ENCODE measurements at regions of chr1 and their contacts with region 1.

Region 1: DNA sequence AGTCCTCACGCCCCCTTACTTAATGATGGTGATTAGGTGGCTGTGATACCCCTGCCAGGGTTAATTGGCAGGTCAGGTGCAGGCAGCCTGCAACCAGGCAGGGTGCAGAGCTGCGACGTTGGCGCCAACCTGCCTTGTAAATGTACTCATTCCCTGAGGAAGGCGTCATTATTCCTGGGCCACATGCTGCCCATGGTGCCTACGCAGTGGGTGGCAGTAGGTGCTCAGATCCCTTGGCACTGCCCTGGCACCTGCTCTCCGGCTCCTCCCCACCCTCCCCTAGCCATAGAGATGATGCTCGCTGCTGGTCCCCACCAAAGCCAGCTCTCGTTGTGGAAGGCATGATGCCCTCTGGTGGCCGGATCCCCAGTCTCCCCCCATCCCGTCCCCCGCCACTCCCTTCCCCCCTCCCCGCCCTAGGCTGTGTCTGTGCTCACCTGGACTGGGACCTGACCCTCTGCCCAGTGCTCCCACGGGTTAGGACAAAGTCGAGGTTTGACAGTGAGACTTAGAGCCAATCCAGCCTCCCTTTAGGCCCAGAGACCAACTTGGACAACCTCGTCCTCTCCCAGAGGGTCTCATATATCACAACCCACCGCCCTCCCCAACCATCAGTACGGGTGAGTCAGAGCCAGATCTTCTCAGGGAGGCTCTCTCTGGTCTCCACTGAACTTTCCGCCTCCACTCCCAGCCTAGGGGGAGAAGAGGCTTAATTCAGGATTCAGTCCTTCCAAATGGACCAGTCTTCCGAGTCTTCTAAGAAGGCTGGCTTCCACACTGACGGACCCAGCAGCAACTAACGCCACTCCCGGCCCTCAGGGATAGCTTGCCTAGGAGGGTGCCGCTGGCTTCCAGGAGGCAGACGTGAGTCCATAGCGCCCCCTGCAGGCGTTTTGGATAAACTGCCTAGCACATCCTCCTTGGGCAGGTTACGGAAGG is 5.7 kb downstream of the KRTCAP2 start:
- DNase-seq: peak; percentile 74 to 95 (median 89)
- ATAC-seq: peak; percentile 87 to 91 (median 89)
- H3K4me3 ChIP-seq: no peak overlapping the region
- H3K27ac ChIP-seq: peak overlapping the region in 1 of 4 donors; percentile 12
- H3K4me1 ChIP-seq: peaks cover 0 to 10% (median 6%) of the 10 kb centered on the region in 3 donors
- H3K27me3 ChIP-seq: no peaks in the 10 kb centered on the region
- CTCF ChIP-seq: peak; percentile 65 to 95 (median 90)

Region 2: DNA sequence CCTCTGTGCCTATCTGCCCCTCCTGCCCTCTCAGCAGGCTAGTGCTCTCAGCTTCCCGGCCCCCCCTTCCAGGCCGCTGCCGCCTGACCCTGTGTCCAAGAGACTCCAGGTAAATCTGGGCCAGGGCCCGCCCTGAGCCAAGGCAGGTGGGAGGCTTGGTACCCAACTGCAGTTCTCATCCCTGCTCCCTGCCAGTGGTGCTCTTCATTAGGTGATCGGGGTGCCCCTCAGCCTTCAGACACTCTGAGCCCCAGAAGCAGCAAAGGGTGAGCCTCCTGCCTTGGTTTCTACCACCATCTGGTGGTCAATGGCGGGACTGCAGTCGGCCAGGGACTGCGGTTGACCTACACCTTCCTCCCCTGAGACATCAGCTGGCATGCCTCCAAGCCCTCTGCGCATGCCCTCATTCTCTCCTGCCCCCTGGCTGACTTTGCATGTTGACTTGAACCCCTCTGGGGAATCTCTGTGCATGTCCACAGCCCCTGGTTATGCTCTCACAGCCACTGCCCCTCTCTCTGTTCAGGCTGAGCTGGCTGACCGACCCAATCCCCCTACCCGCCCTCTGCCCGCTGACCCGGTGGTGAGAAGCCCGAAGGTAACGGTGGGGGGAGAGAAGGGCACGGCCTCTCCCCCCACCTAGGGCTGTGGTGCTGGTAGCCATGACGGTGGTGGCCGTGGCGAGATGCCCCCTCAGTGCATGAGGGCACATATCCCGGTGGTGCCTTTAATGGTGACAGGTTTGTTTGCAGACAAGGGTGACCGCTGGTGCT is 105.9 kb before region 1 on chr1:
- intact Hi-C with region 1: no loop called
- DNase-seq: peak; percentile 80 to 99 (median 94)
- ATAC-seq: peak; percentile 50 to 71 (median 58)
- H3K4me3 ChIP-seq: no peak overlapping the region
- H3K27ac ChIP-seq: no peak overlapping the region
- H3K4me1 ChIP-seq: peaks cover 19 to 23% (median 20%) of the 10 kb centered on the region in 3 donors
- H3K27me3 ChIP-seq: no peaks in the 10 kb centered on the region
- CTCF ChIP-seq: peak; percentile 96 to 99 (median 98)

Region 3: GRCh38 chr1:155091071-155091709 is 76.2 kb before region 1 on chr1:
- intact Hi-C with region 1: loop called in 2 of 3 experiments (anchors 2 to 5 kb)
- DNase-seq: peak in 5 of 6 donors; percentile 58 to 94 (median 84)
- ATAC-seq: peak; percentile 77 to 86 (median 84)
- H3K4me3 ChIP-seq: no peak overlapping the region
- H3K27ac ChIP-seq: no peak overlapping the region
- H3K4me1 ChIP-seq: peaks cover 0 to 4% (median 1%) of the 10 kb centered on the region in 3 donors
- H3K27me3 ChIP-seq: no peaks in the 10 kb centered on the region
- CTCF ChIP-seq: peak; percentile 94 to 99 (median 96)

Region 4: GRCh38 chr1:155105604-155106022 is 61.8 kb before region 1 on chr1:
- intact Hi-C with region 1: loop called in 1 of 3 experiments (anchors 10 kb)
- DNase-seq: no peak
- ATAC-seq: peak in 2 of 4 donors; percentile 18 to 31
- H3K4me3 ChIP-seq: no peak overlapping the region
- H3K27ac ChIP-seq: no peak overlapping the region
- H3K4me1 ChIP-seq: peaks cover 0 to 5% (median 0%) of the 10 kb centered on the region in 3 donors
- H3K27me3 ChIP-seq: no peaks in the 10 kb centered on the region
- CTCF ChIP-seq: no peak

Region 5: GRCh38 chr1:155244368-155245162 is 77.1 kb after region 1 on chr1:
- intact Hi-C with region 1: no loop called
- DNase-seq: peak; percentile 88 to 97 (median 96)
- ATAC-seq: peak; percentile 91 to 94 (median 92)
- H3K4me3 ChIP-seq: peak overlapping the region; percentile 43 to 66 (median 54)
- H3K27ac ChIP-seq: peak overlapping the region; percentile 69 to 93 (median 84)
- H3K4me1 ChIP-seq: peaks cover 0 to 4% (median 0%) of the 10 kb centered on the region in 3 donors
- H3K27me3 ChIP-seq: no peaks in the 10 kb centered on the region
- CTCF ChIP-seq: no peak

Measured in pancreas (tissue), 10 donors.